ENCODE measurements at regions of chr15 and their contacts with region 1.

Region 1: GRCh38 chr15:22922003-22922402 is 58.2 kb downstream of the CYFIP1 start:
- DNase-seq: no peak
- ATAC-seq: no peak
- H3K4me3 ChIP-seq: no peak overlapping the region
- H3K27ac ChIP-seq: no peak overlapping the region
- H3K4me1 ChIP-seq: no peaks in the 10 kb centered on the region
- H3K27me3 ChIP-seq: no peaks in the 10 kb centered on the region
- CTCF ChIP-seq: no peak
- EP300 ChIP-seq: no peak
- POLR2A ChIP-seq: no peak
- RAD21 ChIP-seq: no peak

Region 2: GRCh38 chr15:22806664-22807063 is 115.3 kb before region 1 on chr15:
- CTCF ChIA-PET with region 1: no interaction called
- POLR2A ChIA-PET with region 1: no interaction called
- RAD21 ChIA-PET with region 1: no interaction called
- SMC1A ChIA-PET with region 1: no interaction called
- in situ Hi-C with region 1: no loop called
- intact Hi-C with region 1: no loop called
- DNase-seq: no peak
- ATAC-seq: no peak
- H3K4me3 ChIP-seq: no peak overlapping the region
- H3K27ac ChIP-seq: no peak overlapping the region
- H3K4me1 ChIP-seq: peaks cover 31% of the 10 kb centered on the region
- H3K27me3 ChIP-seq: no peaks in the 10 kb centered on the region
- CTCF ChIP-seq: no peak
- EP300 ChIP-seq: no peak
- POLR2A ChIP-seq: no peak
- RAD21 ChIP-seq: no peak

Region 3: GRCh38 chr15:22850055-22850454 is 71.9 kb before region 1 on chr15:
- CTCF ChIA-PET with region 1: no interaction called
- POLR2A ChIA-PET with region 1: no interaction called
- RAD21 ChIA-PET with region 1: no interaction called
- SMC1A ChIA-PET with region 1: no interaction called
- in situ Hi-C with region 1: no loop called
- intact Hi-C with region 1: loop called (anchors 10 kb)
- DNase-seq: no peak
- ATAC-seq: peak; percentile 63
- H3K4me3 ChIP-seq: no peak overlapping the region
- H3K27ac ChIP-seq: no peak overlapping the region
- H3K4me1 ChIP-seq: no peaks in the 10 kb centered on the region
- H3K27me3 ChIP-seq: no peaks in the 10 kb centered on the region
- CTCF ChIP-seq: no peak
- EP300 ChIP-seq: no peak
- POLR2A ChIP-seq: no peak
- RAD21 ChIP-seq: no peak

Region 4: GRCh38 chr15:22888120-22888859 is 33.7 kb before region 1 on chr15:
- CTCF ChIA-PET with region 1: no interaction called
- POLR2A ChIA-PET with region 1: no interaction called
- RAD21 ChIA-PET with region 1: no interaction called
- SMC1A ChIA-PET with region 1: no interaction called
- in situ Hi-C with region 1: no loop called
- intact Hi-C with region 1: no loop called
- DNase-seq: no peak
- ATAC-seq: no peak
- H3K4me3 ChIP-seq: no peak overlapping the region
- H3K27ac ChIP-seq: no peak overlapping the region
- H3K4me1 ChIP-seq: no peaks in the 10 kb centered on the region
- H3K27me3 ChIP-seq: no peaks in the 10 kb centered on the region
- CTCF ChIP-seq: no peak
- EP300 ChIP-seq: no peak
- POLR2A ChIP-seq: no peak
- RAD21 ChIP-seq: no peak

Region 5: GRCh38 chr15:22903961-22904534 is 18.0 kb before region 1 on chr15:
- CTCF ChIA-PET with region 1: no interaction called
- POLR2A ChIA-PET with region 1: no interaction called
- RAD21 ChIA-PET with region 1: no interaction called
- SMC1A ChIA-PET with region 1: no interaction called
- in situ Hi-C with region 1: no loop called
- intact Hi-C with region 1: no loop called
- DNase-seq: no peak
- ATAC-seq: no peak
- H3K4me3 ChIP-seq: no peak overlapping the region
- H3K27ac ChIP-seq: no peak overlapping the region
- H3K4me1 ChIP-seq: no peaks in the 10 kb centered on the region
- H3K27me3 ChIP-seq: no peaks in the 10 kb centered on the region
- CTCF ChIP-seq: no peak
- EP300 ChIP-seq: no peak
- POLR2A ChIP-seq: no peak
- RAD21 ChIP-seq: no peak

Region 6: DNA sequence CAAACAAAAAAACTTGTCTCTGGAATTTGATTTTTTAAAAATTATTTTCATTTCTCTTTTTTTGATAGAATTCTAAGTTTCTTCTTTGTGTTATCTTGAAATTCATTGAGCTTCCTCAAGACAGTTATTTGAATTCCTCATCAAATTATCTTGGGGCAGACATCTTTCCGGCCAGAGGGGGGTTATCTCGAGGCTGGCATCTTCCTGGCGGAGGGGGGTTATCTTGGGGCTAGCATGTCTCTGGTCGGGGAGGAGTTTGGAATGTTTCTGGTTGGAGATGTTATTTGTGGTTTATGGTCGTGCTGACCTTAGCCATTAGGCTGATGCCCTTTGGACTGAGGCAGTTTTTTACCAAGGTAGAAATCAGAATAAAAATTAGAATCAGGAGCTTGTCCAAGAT is 133.3 kb after region 1 on chr15:
- CTCF ChIA-PET with region 1: no interaction called
- POLR2A ChIA-PET with region 1: no interaction called
- RAD21 ChIA-PET with region 1: no interaction called
- SMC1A ChIA-PET with region 1: no interaction called
- in situ Hi-C with region 1: no loop called
- intact Hi-C with region 1: no loop called
- DNase-seq: no peak
- ATAC-seq: no peak
- H3K4me3 ChIP-seq: no peak overlapping the region
- H3K27ac ChIP-seq: no peak overlapping the region
- H3K4me1 ChIP-seq: no peaks in the 10 kb centered on the region
- H3K27me3 ChIP-seq: no peaks in the 10 kb centered on the region
- CTCF ChIP-seq: no peak
- EP300 ChIP-seq: no peak
- POLR2A ChIP-seq: no peak
- RAD21 ChIP-seq: no peak